Common myeloid progenitor, CD34-positive (primary cell): ENCODE measurements at regions of chr2 and their contacts with region 1.

Region 1: GRCh38 chr2:73156539-73157124 is 43.9 kb upstream of the RAB11FIP5 start:
- DNase-seq: peak; percentile 62 to 76 (median 76)
- H3K4me3 ChIP-seq: peak overlapping the region in 1 of 7 experiments; percentile 48
- H3K27ac ChIP-seq: no peak overlapping the region
- H3K4me1 ChIP-seq: peaks cover 0 to 7% (median 2%) of the 10 kb centered on the region in 4 experiments
- H3K27me3 ChIP-seq: peaks cover 2 to 10% (median 8%) of the 10 kb centered on the region in 5 experiments

Region 2: DNA sequence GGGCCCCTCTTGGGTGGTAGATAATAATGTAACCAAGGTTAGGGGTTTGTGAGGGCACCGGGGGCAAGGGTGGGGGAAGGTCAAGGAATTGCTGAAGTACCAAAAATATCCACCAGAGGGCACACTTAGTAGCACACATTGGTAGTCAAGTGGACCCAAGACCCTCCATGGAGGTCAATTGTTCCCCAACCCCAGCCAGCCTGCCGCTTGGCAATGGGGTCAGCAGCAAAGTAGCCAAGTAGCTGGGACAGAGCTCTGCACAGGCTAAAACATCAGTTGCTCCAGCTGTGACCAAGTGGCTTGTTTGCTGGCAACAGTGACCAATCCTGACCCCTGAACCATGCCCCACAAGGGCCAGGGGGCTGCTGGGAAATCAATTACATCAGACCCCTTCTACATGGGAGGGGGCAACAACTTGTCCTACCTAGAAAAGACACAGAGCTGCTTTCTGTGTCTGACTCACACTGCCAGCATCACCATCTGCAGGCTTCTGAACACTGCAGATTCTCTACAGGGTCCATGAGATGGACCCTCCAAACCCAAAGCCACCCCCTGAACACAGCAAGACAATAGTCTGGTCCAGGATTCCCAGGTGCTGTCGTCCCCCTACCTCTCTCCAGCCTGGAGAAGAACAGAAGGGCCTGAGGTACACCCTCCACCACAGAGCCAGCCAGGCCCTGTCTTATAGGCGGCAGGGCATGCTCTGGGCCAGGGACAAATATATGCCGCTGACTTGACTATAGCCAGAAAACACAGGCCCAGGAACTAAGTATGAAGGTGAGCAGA is 163.3 kb before region 1 on chr2:
- CTCF ChIA-PET with region 1: interaction called, 20 read pairs
- POLR2A ChIA-PET with region 1: no interaction called
- DNase-seq: peak; percentile 46 to 63 (median 47)
- H3K4me3 ChIP-seq: no peak overlapping the region
- H3K27ac ChIP-seq: no peak overlapping the region
- H3K4me1 ChIP-seq: no peaks in the 10 kb centered on the region
- H3K27me3 ChIP-seq: no peaks in the 10 kb centered on the region

Region 3: GRCh38 chr2:73091164-73091563 is 65.5 kb before region 1 on chr2:
- CTCF ChIA-PET with region 1: interaction called, 78 read pairs
- POLR2A ChIA-PET with region 1: no interaction called
- DNase-seq: no peak
- H3K4me3 ChIP-seq: no peak overlapping the region
- H3K27ac ChIP-seq: no peak overlapping the region
- H3K4me1 ChIP-seq: peaks cover 0 to 13% (median 10%) of the 10 kb centered on the region in 4 experiments
- H3K27me3 ChIP-seq: no peaks in the 10 kb centered on the region